Activated naive CD4-positive, alpha-beta T cell treated with anti-CD3 and anti-CD28 coated beads for 36 hours (primary cell): ENCODE measurements at regions of chr9 and their contacts with region 1.

Region 1: DNA sequence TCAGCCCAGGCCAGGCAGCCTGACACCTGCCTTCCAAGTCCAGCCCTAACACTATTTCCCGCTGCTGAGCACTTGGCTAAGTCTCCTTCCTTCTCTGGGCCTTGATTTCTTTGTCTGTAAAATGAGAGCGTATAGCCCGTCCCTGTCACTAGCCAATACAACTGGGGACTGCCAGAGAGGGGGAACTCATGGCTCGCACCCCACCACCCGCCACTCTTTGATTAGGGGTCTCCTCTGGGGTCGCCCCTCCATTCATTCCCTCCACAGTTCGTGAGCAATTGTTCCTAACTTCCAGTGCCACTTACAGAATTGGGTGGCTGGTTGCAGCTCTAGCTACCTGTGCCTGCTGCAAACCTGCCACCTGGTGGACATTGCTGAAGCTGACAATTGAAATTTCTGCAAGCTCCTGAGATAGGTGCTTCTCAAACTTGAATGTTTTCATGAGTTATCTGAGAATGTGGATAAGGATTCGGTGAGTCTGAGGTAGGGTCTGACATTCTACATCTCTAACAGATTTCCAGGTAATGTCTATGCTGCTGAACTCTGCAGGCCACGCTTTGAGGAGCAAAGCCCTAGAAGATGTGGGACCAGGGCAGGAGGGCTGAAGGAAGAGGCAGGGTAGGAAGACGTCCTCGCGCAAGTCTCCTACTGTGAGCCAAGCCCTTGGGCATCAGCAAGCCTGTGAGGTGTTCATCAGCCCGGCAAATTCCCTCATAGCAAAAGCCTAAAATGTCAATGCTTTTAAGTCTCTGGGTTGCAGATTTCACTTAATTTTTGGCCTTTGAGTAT is 13.3 kb upstream of the RECK start:
- DNase-seq: peak; percentile 84
- H3K4me3 Mint-ChIP-seq: no peak overlapping the region
- H3K27ac Mint-ChIP-seq: no peak overlapping the region
- H3K4me1 Mint-ChIP-seq: no peaks in the 10 kb centered on the region
- H3K27me3 Mint-ChIP-seq: no peaks in the 10 kb centered on the region

Region 2: DNA sequence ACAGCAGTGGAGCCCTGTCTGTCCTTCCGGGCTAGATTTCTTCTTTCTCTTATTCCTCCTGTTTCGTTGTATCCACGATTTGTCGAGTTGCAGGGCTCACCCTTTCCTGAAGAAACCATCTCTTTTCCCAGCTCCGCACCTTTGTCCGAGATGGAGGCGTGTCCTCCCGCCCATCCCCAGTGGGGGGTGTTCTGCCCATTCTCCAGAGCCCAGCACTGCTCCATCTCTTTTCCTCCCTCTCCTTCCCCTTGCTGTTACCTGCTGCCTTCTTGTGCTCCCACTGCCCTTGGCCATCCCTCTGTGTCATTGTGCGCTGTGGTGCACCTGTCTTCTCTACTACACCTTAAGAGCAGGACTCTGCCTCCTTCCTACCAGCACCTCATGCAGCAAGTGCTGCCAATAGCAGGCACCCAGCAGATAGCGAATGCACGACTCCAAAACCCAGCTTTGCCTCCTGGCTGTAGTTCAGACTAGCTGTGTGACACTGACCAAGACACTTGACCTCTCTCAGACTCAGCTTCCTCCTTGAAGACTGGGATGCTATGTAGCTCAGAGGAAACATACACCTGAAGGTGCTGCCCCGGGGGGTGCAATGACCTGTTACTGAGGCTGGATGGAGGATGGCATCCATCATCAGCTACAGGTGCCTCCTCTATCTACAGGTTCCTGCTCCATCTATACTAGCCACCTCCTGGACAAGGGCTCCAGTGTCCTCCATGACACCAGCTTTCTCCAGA is 162.1 kb before region 1 on chr9:
- CTCF ChIA-PET with region 1: no interaction called
- intact Hi-C with region 1: no loop called
- DNase-seq: no peak
- H3K4me3 Mint-ChIP-seq: no peak overlapping the region
- H3K27ac Mint-ChIP-seq: no peak overlapping the region
- H3K4me1 Mint-ChIP-seq: no peaks in the 10 kb centered on the region
- H3K27me3 Mint-ChIP-seq: peaks cover 9% of the 10 kb centered on the region

Region 3: DNA sequence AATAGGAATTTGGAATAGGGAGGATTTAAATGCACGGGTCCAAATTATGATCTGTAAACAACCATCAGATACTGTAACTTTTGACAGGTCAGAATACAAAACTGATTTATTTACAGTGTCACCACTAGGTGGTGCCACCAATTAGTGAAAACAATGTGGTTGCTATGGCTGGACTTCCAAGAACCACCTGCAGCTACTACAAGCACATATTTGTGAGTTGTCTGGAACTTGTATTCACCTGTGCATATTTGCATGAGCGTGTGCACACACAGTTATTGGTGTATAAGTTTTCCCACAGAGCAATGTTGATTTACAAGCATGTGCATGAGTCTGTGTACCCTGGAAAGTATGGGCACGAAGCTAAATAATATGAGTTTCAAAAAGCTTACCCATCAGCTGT is 120.4 kb before region 1 on chr9:
- CTCF ChIA-PET with region 1: interaction called, 31 read pairs
- intact Hi-C with region 1: loop called (anchors 1 kb)
- DNase-seq: peak; percentile 52
- H3K4me3 Mint-ChIP-seq: no peak overlapping the region
- H3K27ac Mint-ChIP-seq: no peak overlapping the region
- H3K4me1 Mint-ChIP-seq: peaks cover 23% of the 10 kb centered on the region
- H3K27me3 Mint-ChIP-seq: no peaks in the 10 kb centered on the region

Region 4: DNA sequence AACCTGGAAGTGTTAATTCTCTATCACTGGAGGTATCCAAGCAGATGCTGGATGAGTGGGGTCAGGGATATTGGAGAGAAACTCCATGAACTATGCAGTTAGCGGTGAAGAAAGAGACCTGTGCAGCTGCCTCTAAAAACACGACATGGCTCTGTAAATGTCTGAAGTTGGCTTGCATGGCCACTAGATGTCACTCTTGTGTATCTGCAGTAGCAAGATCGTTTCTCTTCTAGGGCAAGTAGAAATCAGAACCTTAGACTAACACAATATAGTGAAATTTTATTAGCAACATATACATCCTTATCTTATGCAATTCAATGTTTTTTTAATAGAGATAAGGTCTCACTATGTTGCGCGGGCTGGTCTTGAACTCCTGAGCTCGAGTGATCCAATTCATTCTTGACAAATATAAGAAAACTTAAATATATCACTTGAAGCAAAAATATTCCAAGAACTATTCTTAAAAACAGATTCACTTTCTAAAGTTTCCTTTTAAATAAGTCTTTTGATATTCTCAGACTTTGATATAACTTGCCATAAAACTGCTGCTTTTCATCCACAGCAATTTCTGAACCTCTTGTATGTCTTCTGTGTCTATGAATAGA is 68.4 kb before region 1 on chr9:
- CTCF ChIA-PET with region 1: interaction called, 59 read pairs
- intact Hi-C with region 1: loop called (anchors 1 kb)
- DNase-seq: peak; percentile 73
- H3K4me3 Mint-ChIP-seq: no peak overlapping the region
- H3K27ac Mint-ChIP-seq: no peak overlapping the region
- H3K4me1 Mint-ChIP-seq: no peaks in the 10 kb centered on the region
- H3K27me3 Mint-ChIP-seq: no peaks in the 10 kb centered on the region

Region 5: DNA sequence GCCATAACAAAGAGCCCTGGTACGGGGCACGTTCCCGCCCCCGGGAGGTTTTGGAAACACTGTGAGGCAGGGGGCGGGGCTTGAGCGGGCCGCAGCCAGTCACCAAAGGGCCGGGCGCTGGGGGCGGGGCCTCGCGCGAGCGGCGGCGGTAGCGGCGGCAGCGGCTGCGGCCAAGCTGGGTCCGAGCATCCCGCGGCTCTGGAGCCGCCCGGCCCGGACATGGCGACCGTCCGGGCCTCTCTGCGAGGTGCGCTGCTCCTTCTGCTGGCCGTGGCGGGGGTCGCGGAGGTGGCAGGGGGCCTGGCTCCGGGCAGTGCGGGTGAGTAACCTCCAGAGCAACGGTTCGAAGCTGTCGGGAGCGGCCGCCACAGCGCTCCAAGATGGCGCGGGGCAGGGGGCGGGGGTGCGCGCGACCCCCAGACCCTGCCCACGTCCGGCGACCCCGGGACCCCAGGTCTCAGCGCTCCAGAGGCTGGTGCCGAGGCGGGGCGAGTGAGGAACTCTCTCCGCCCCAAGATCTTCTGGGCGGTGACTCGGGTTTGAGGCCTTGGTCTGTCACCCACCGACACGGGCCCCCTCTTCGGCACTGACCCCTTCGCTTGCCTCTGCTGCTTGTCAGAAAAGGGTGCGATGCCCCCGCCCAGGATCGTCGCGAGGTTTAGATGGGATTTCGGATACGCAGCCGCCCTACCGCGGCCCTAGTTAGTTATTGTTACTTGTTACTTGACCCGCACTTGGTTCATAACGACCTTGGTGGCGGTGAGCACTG is 13.5 kb after region 1 on chr9 and contains the start of gene RECK:
- CTCF ChIA-PET with region 1: interaction called, 12 read pairs
- intact Hi-C with region 1: no loop called
- DNase-seq: peak; percentile 88
- H3K4me3 Mint-ChIP-seq: peak within 1 kb of the TSS; percentile 93
- H3K27ac Mint-ChIP-seq: peak within 1 kb of the TSS; percentile 67
- H3K4me1 Mint-ChIP-seq: peaks cover 39% of the 10 kb centered on the region
- H3K27me3 Mint-ChIP-seq: no peaks in the 10 kb centered on the region
- total RNA-seq, gene RECK: 7.8 to 8.5 TPM

Region 6: DNA sequence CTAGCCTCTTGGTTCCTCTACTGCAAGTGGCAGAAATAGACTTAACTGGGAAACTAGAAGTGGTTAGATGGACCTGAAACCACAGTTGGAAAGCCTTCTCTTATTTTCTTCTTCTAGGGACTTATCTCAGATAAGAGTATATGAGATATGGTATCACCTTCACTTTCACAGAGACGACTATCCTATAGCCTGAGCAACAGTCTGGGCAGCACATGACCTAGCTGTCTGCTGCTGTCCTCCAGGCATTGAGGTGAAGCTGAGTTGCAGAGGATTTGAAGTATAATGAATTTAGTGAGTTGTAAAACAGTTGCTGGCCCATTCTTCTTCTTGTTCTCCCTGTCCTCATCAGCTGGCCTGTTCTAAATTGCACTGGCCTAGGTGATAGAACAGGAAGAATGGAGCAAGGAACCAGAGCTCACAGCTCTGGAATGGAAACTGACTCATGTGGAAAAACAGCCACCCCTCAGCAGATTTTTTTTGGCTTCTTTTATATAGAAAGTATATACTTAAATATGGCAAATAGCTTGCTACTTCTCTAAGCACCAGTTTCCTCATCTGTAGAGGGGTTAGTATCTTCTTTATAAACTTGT is 41.1 kb after region 1 on chr9:
- CTCF ChIA-PET with region 1: no interaction called
- intact Hi-C with region 1: no loop called
- DNase-seq: no peak
- H3K4me3 Mint-ChIP-seq: no peak overlapping the region
- H3K27ac Mint-ChIP-seq: no peak overlapping the region
- H3K4me1 Mint-ChIP-seq: peaks cover 5% of the 10 kb centered on the region
- H3K27me3 Mint-ChIP-seq: no peaks in the 10 kb centered on the region